Heart left ventricle (tissue), 16 donors: ENCODE measurements at regions of chr19 and their contacts with region 1.

Region 1: DNA sequence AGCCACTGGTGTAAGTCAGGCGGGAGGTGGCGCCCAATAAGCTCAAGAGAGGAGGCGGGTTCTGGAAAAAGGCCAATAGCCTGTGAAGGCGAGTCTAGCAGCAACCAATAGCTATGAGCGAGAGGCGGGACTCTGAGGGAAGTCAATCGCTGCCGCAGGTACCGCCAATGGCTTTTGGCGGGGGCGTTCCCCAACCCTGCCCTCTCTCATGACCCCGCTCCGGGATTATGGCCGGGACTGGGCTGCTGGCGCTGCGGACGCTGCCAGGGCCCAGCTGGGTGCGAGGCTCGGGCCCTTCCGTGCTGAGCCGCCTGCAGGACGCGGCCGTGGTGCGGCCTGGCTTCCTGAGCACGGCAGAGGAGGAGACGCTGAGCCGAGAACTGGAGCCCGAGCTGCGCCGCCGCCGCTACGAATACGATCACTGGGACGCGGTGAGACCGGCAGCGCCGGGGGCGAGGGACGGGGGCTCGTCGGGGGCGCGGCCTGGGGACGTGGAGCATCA is at the start of gene ALKBH7:
- DNase-seq: peak; percentile 96 to 100 (median 100)
- ATAC-seq: peak; percentile 85 to 91 (median 89)
- H3K4me3 ChIP-seq: peak within 1 kb of the TSS; percentile 62 to 99 (median 74)
- H3K27ac ChIP-seq: peak within 1 kb of the TSS; percentile 87 to 100 (median 99)
- H3K4me1 ChIP-seq: peaks cover 0 to 20% (median 7%) of the 10 kb centered on the region in 12 donors
- H3K27me3 ChIP-seq: no peaks in the 10 kb centered on the region
- CTCF ChIP-seq: peak in 1 of 12 donors; percentile 25
- POLR2A ChIP-seq: peak in 1 of 2 donors; percentile 52
- total RNA-seq, gene ALKBH7: 92.4 to 214 (median 148) TPM

Region 2: GRCh38 chr19:5904352-5905113 is 468.1 kb before region 1 on chr19 and contains the start of gene VMAC:
- intact Hi-C with region 1: loop called in 1 of 10 experiments (anchors 10 kb)
- DNase-seq: peak; percentile 100
- ATAC-seq: peak; percentile 84 to 91 (median 90)
- H3K4me3 ChIP-seq: peak within 1 kb of the TSS; percentile 61 to 98 (median 86)
- H3K27ac ChIP-seq: peak within 1 kb of the TSS; percentile 57 to 95 (median 91)
- H3K4me1 ChIP-seq: peaks cover 4 to 38% (median 23%) of the 10 kb centered on the region in 12 donors
- H3K27me3 ChIP-seq: no peaks in the 10 kb centered on the region
- CTCF ChIP-seq: no peak
- POLR2A ChIP-seq: peak in 1 of 2 donors; percentile 70
- total RNA-seq, gene VMAC: 1.7 to 3.9 (median 2.3) TPM

Region 3: DNA sequence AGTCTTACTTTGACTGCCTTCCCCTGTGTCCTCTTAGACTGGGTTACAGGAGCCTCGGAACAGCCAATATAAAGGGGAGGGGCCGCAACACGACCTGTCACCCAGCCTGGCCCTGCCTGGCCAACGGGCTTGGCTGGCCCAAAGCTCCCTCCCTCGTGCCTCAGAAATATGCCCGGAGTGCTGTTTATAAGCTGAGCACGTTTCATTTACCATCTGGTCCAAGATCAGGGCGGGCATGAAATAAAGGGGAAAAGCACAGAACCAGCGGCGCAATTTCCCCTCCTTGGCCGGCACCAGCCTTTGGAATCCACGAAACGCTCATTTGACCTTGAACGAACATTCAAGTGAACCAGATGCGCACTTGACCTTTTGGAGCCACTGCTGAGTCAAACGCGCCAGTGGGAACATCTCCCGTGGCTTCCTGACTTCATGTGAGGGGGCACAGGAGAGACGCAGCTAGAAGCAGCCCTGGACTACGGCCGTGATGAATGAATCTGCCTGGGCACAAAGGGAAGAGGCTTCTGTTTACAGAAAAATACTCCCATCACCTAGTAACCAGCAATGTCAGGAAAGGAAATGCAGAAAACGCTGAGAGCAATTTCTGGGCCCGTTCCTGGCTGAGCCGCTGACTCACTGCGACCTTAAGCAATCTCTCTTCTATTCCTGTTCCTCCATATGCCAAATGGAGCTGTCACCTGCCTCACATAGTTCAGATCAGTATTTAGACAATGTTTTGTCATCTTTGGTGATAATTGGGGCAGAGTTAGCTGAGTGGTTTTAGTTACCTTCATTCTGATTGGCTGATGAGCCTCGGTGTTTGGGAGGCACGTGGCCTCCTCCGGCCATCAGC is 315.6 kb before region 1 on chr19:
- intact Hi-C with region 1: loop called in 1 of 10 experiments (anchors 5 kb)
- DNase-seq: peak in 4 of 5 donors; percentile 70 to 86 (median 78)
- ATAC-seq: peak; percentile 76 to 92 (median 88)
- H3K4me3 ChIP-seq: peak overlapping the region in 9 of 12 donors; percentile 4 to 32 (median 22)
- H3K27ac ChIP-seq: peak overlapping the region; percentile 74 to 97 (median 90)
- H3K4me1 ChIP-seq: peaks cover 0 to 62% (median 42%) of the 10 kb centered on the region in 12 donors
- H3K27me3 ChIP-seq: no peaks in the 10 kb centered on the region
- CTCF ChIP-seq: no peak
- POLR2A ChIP-seq: peak in 1 of 2 donors; percentile 32

Region 4: DNA sequence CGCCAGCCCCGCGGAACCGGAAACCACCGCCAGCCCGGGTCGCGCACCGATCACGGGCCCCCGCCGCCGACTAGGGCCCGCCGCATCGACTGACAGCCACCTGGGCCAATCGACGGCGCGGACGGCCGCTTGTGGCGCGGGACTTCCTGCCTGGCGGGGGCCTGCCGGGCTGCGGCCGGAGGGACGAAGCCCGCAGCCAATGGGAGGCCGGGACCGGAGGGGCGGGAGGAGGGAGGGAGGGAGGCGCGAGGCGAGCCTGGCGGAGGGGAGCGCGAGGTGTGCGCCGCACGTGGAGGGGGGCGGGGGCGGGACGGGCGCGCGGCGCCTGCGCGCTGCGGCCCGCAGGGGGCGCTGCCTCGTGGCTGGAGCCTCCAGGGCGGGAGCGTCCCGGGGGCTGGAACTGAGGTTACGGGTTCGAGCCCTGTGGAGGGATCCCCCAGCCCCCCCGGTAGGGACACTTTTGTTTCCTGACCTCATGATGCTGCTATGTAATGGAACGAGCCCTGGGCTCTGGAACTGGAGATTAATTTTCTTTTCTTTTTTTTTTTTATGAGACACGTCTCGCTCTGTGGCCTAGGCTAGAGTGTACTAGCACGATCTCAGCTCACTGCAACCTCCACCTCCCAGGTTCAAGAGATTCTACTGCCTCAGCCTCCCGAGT is 92.6 kb before region 1 on chr19 and contains the start of gene MLLT1:
- intact Hi-C with region 1: loop called in 1 of 10 experiments (anchors 5 kb)
- DNase-seq: peak; percentile 98 to 99 (median 98)
- ATAC-seq: peak; percentile 93 to 99 (median 98)
- H3K4me3 ChIP-seq: peak within 1 kb of the TSS; percentile 50 to 97 (median 84)
- H3K27ac ChIP-seq: peak within 1 kb of the TSS in 11 of 12 donors; percentile 44 to 90 (median 81)
- H3K4me1 ChIP-seq: peaks cover 8 to 48% (median 37%) of the 10 kb centered on the region in 12 donors
- H3K27me3 ChIP-seq: no peaks in the 10 kb centered on the region
- CTCF ChIP-seq: peak; percentile 56 to 91 (median 82)
- POLR2A ChIP-seq: peak in 1 of 2 donors; percentile 46
- total RNA-seq, gene MLLT1: 21.0 to 45.9 (median 34.9) TPM

Region 5: GRCh38 chr19:6362027-6362350 is 10.7 kb before region 1 on chr19:
- intact Hi-C with region 1: loop called in 2 of 10 experiments (anchors 1 kb)
- DNase-seq: peak in 1 of 5 donors; percentile 37
- ATAC-seq: peak in 3 of 4 donors; percentile 10 to 23 (median 20)
- H3K4me3 ChIP-seq: peak overlapping the region; percentile 72 to 99 (median 84)
- H3K27ac ChIP-seq: peak overlapping the region; percentile 69 to 94 (median 89)
- H3K4me1 ChIP-seq: peaks cover 0 to 17% (median 7%) of the 10 kb centered on the region in 12 donors
- H3K27me3 ChIP-seq: no peaks in the 10 kb centered on the region
- CTCF ChIP-seq: no peak
- POLR2A ChIP-seq: no peak

Region 6: GRCh38 chr19:6393074-6393983 is 20.7 kb after region 1 on chr19 and contains the start of gene GTF2F1:
- intact Hi-C with region 1: loop called in 4 of 10 experiments (anchors 1 to 2 kb)
- DNase-seq: peak; percentile 96 to 98 (median 98)
- ATAC-seq: peak; percentile 92 to 96 (median 94)
- H3K4me3 ChIP-seq: peak within 1 kb of the TSS; percentile 60 to 99 (median 81)
- H3K27ac ChIP-seq: peak within 1 kb of the TSS; percentile 87 to 98 (median 94)
- H3K4me1 ChIP-seq: peaks cover 0 to 17% (median 10%) of the 10 kb centered on the region in 12 donors
- H3K27me3 ChIP-seq: no peaks in the 10 kb centered on the region
- CTCF ChIP-seq: peak in 4 of 12 donors; percentile 15 to 33 (median 25)
- POLR2A ChIP-seq: peak in 1 of 2 donors; percentile 40
- total RNA-seq, gene GTF2F1: 20.8 to 41.8 (median 29.8) TPM

Region 7: GRCh38 chr19:6424939-6425731 is 52.5 kb after region 1 on chr19:
- intact Hi-C with region 1: loop called in 3 of 10 experiments (anchors 2 to 5 kb)
- DNase-seq: peak; percentile 99 to 100 (median 100)
- ATAC-seq: peak; percentile 94 to 97 (median 96)
- H3K4me3 ChIP-seq: peak overlapping the region in 10 of 12 donors; percentile 24 to 96 (median 76)
- H3K27ac ChIP-seq: peak overlapping the region; percentile 59 to 89 (median 84)
- H3K4me1 ChIP-seq: peaks cover 0 to 41% (median 21%) of the 10 kb centered on the region in 12 donors
- H3K27me3 ChIP-seq: no peaks in the 10 kb centered on the region
- CTCF ChIP-seq: peak in 2 of 12 donors; percentile 14 to 26
- POLR2A ChIP-seq: peak in 1 of 2 donors; percentile 31

Region 8: GRCh38 chr19:6551607-6552450 is 179.2 kb after region 1 on chr19:
- intact Hi-C with region 1: no loop called
- DNase-seq: no peak
- ATAC-seq: peak in 3 of 4 donors; percentile 32 to 56 (median 49)
- H3K4me3 ChIP-seq: no peak overlapping the region
- H3K27ac ChIP-seq: no peak overlapping the region
- H3K4me1 ChIP-seq: peaks cover 0 to 4% (median 0%) of the 10 kb centered on the region in 12 donors
- H3K27me3 ChIP-seq: peaks cover 0 to 31% (median 10%) of the 10 kb centered on the region in 9 donors
- CTCF ChIP-seq: peak in 2 of 12 donors; percentile 8 to 18
- POLR2A ChIP-seq: no peak